ENCODE measurements at regions of chr6 and their contacts with region 1.

Region 1: DNA sequence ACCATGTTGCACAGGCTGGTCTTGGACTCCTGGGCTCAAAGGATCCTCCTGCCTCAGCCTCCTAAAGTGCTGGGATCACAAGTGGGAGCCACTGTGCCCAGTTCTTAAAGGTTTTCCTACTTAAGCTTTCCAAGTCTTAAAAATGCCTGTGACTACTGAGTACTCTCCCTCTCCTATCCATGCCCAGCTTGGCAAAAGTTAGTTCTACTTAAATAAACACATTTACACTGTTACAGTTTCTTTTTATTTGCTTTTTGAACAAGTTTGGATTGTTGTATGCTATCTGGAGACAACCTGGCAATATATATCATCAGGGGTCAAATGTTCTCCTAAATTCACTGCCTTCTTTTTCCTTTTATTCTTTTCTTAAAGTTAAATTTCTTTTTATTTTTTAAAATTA is 61.0 kb upstream of the GCM1 start:
- DNase-seq: no peak
- ATAC-seq: no peak
- H3K4me3 ChIP-seq: no peak overlapping the region
- H3K27ac ChIP-seq: no peak overlapping the region
- H3K4me1 ChIP-seq: no peaks in the 10 kb centered on the region
- H3K27me3 ChIP-seq: peaks cover 0 to 9% of the 10 kb centered on the region in 2 experiments; a peak in 1 of 5 replicates
- CTCF ChIP-seq: no peak
- EP300 ChIP-seq: no peak
- POLR2A ChIP-seq: no peak
- RAD21 ChIP-seq: no peak

Region 2: DNA sequence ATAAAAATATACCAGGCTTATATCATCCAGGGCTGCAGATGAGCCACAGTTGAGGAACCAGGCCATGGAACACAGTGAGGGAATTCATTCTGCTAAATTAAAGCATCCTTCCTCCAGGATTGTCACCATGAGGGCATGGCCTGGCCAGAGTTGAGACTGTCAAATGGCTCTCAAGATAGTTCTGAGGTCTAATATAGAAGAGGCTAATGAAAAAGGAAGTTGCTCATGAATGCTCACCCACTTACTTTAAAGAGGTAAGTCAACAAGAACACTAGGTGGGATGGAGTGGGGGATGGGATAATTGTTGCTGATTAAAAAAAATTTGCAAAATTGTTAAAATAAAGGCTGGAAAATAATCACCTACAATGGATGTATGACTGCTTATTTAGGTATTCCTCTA is 10.9 kb after region 1 on chr6:
- CTCF ChIA-PET with region 1: no interaction called
- POLR2A ChIA-PET with region 1: no interaction called
- in situ Hi-C with region 1: no loop called
- intact Hi-C with region 1: loop called (anchors 1 kb)
- DNase-seq: no peak
- ATAC-seq: no peak
- H3K4me3 ChIP-seq: no peak overlapping the region
- H3K27ac ChIP-seq: no peak overlapping the region
- H3K4me1 ChIP-seq: no peaks in the 10 kb centered on the region
- H3K27me3 ChIP-seq: no peaks in the 10 kb centered on the region; a peak in 1 of 5 replicates
- CTCF ChIP-seq: no peak
- EP300 ChIP-seq: no peak
- POLR2A ChIP-seq: no peak
- RAD21 ChIP-seq: no peak

Region 3: DNA sequence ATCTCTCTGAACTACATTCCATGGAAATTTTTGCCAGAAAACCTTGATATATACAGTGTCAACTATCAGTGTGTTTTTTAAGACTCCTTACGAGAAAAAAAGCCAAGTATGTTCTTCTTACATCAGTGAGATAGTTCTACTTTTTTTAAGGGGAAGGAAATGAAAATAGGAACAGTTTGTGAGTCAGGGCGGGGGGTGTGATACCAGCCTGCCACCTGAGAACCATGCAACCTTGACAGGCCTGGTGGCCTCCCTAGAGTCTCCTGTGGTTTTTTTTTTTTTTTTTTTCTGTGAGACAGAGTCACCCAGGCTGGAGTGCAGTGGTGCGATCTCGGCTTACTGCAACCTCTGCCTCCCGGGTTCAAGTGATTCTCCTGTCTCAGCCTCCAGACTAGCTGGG is 35.3 kb after region 1 on chr6:
- CTCF ChIA-PET with region 1: no interaction called
- POLR2A ChIA-PET with region 1: no interaction called
- in situ Hi-C with region 1: no loop called
- intact Hi-C with region 1: no loop called
- DNase-seq: no peak
- ATAC-seq: no peak
- H3K4me3 ChIP-seq: no peak overlapping the region
- H3K27ac ChIP-seq: no peak overlapping the region
- H3K4me1 ChIP-seq: no peaks in the 10 kb centered on the region
- H3K27me3 ChIP-seq: no peaks in the 10 kb centered on the region
- CTCF ChIP-seq: no peak
- EP300 ChIP-seq: no peak
- POLR2A ChIP-seq: no peak
- RAD21 ChIP-seq: no peak